Heart right ventricle (tissue), 16 donors: ENCODE measurements at regions of chr3 and their contacts with region 1.

Region 1: DNA sequence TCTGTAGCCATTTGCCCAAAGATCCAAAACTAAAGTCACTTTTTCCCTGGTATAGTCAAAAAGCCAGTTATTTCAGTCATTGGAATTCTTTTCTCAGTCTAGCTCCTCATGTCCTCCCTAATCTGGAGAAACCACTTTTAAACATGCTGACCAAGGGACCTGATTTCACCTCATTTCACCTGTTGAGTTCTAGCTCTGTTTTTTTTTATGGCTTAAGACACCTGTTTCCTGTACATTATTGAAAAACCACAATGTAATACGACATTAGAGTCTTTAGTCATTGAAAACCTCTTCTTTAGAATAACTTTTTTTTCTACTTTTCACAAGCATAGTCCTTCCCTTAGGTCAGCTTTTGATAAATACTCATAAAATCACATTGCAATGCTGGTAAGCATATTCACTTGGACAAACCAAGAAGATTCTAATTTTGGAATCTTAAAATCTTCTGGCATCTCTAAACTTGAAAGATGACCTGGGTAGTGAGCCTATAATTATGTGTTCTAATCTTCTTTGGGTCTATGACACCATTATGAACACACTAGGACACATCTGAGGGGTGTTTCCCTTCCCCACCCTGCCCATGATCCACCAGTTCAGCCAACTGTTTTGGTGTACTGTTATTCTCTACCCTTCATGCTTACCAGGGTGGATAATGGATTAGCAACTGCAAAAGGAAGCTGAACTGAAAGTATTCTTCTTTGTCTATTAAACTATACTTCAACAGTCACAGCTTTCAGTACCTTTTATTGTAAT is 103.5 kb upstream of the FXR1 start:
- DNase-seq: no peak
- ATAC-seq: no peak
- H3K4me3 ChIP-seq: no peak overlapping the region
- H3K27ac ChIP-seq: no peak overlapping the region
- H3K4me1 ChIP-seq: peaks cover 0 to 19% (median 5%) of the 10 kb centered on the region in 9 donors
- H3K27me3 ChIP-seq: no peaks in the 10 kb centered on the region
- CTCF ChIP-seq: no peak

Region 2: GRCh38 chr3:180870008-180870699 is 61.2 kb after region 1 on chr3:
- intact Hi-C with region 1: loop called in 1 of 10 experiments (anchors 2 kb)
- DNase-seq: peak; percentile 11 to 40
- ATAC-seq: peak in 7 of 8 donors; percentile 57 to 75 (median 69)
- H3K4me3 ChIP-seq: peak overlapping the region; percentile 15 to 57 (median 48)
- H3K27ac ChIP-seq: peak overlapping the region in 6 of 10 donors; percentile 6 to 64 (median 48)
- H3K4me1 ChIP-seq: peaks cover 0 to 27% (median 16%) of the 10 kb centered on the region in 9 donors
- H3K27me3 ChIP-seq: peaks cover 0 to 8% (median 0%) of the 10 kb centered on the region in 7 donors
- CTCF ChIP-seq: peak in 1 of 9 donors; percentile 13